GM12878 (cell line): ENCODE measurements at regions of chr17 and their contacts with region 1.

Region 1: GRCh38 chr17:47205419-47205963 is 3.7 kb upstream of the MYL4 start:
- DNase-seq: peak; percentile 78
- ATAC-seq: peak; percentile 85
- H3K4me3 ChIP-seq: peak overlapping the region; percentile 2; the same call in 1 of the 2 replicates
- H3K27ac ChIP-seq: peak overlapping the region; percentile 68
- H3K4me1 ChIP-seq: peaks cover 64% of the 10 kb centered on the region
- H3K27me3 ChIP-seq: no peaks in the 10 kb centered on the region
- CTCF ChIP-seq: no peak
- EP300 ChIP-seq: peak in 1 of 2 experiments; percentile 39; a peak in 1 of 4 replicates
- POLR2A ChIP-seq: peak; percentile 31; the same call in 1 of the 2 replicates
- RAD21 ChIP-seq: no peak

Region 2: DNA sequence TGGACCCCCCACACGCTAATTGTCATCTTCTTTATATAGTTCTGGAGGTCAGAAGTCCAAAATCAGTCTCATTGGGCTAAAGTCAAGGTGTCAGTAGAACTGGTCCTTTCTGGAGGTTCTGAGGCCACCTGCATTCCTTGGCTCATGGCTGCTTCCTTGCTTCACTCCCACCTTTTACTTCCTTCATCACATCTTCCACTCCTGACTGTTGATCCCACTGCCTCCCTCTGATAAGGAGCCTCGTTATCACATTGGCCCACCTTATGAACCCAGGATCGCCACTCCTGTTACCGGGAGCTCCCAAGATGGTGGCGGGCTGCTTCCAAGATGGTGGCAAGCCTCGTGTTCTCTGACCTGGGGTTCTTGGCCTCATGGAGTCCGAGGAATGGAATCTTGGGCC is 99.4 kb before region 1 on chr17:
- CTCF ChIA-PET with region 1: no interaction called
- POLR2A ChIA-PET with region 1: no interaction called
- RAD21 ChIA-PET with region 1: no interaction called
- SMC1A ChIA-PET with region 1: no interaction called
- in situ Hi-C with region 1: no loop called
- intact Hi-C with region 1: no loop called
- DNase-seq: no peak
- ATAC-seq: no peak
- H3K4me3 ChIP-seq: no peak overlapping the region
- H3K27ac ChIP-seq: no peak overlapping the region
- H3K4me1 ChIP-seq: no peaks in the 10 kb centered on the region
- H3K27me3 ChIP-seq: no peaks in the 10 kb centered on the region
- CTCF ChIP-seq: no peak
- EP300 ChIP-seq: no peak
- POLR2A ChIP-seq: no peak
- RAD21 ChIP-seq: no peak

Region 3: GRCh38 chr17:47180337-47180736 is 25.2 kb before region 1 on chr17:
- CTCF ChIA-PET with region 1: interaction called, 6 read pairs
- POLR2A ChIA-PET with region 1: interaction called, 4 read pairs
- RAD21 ChIA-PET with region 1: interaction called, 21 read pairs
- SMC1A ChIA-PET with region 1: interaction called, 52 read pairs
- in situ Hi-C with region 1: no loop called
- intact Hi-C with region 1: no loop called
- DNase-seq: no peak
- ATAC-seq: no peak
- H3K4me3 ChIP-seq: no peak overlapping the region
- H3K27ac ChIP-seq: no peak overlapping the region
- H3K4me1 ChIP-seq: no peaks in the 10 kb centered on the region
- H3K27me3 ChIP-seq: no peaks in the 10 kb centered on the region
- CTCF ChIP-seq: no peak
- EP300 ChIP-seq: no peak
- POLR2A ChIP-seq: no peak
- RAD21 ChIP-seq: no peak

Region 4: GRCh38 chr17:47220531-47220999 is 15.1 kb after region 1 on chr17:
- CTCF ChIA-PET with region 1: interaction called, 6 read pairs
- POLR2A ChIA-PET with region 1: interaction called, 6 read pairs
- RAD21 ChIA-PET with region 1: interaction called, 13 read pairs
- SMC1A ChIA-PET with region 1: interaction called, 46 read pairs
- in situ Hi-C with region 1: no loop called
- intact Hi-C with region 1: no loop called
- DNase-seq: no peak
- ATAC-seq: no peak; the same call in 2 of the 3 replicates
- H3K4me3 ChIP-seq: no peak overlapping the region
- H3K27ac ChIP-seq: no peak overlapping the region
- H3K4me1 ChIP-seq: peaks cover 9% of the 10 kb centered on the region
- H3K27me3 ChIP-seq: no peaks in the 10 kb centered on the region
- CTCF ChIP-seq: no peak
- EP300 ChIP-seq: no peak
- POLR2A ChIP-seq: no peak
- RAD21 ChIP-seq: no peak